Activated T-helper 1 cell treated with anti-CD3 and anti-CD28 coated beads, Interleukin-12 subunit alpha, Interleukin-12 subunit beta, Interleukin-2, Interleukin-4 antibody, amounts not matched to agents 30 ng/mL and 10 ng/mL and 1 ng/mL, durations not matched to agents 14 hours and 24 hours and 36 hours (primary cell): ENCODE measurements at regions of chr1 and their contacts with region 1.

Region 1: DNA sequence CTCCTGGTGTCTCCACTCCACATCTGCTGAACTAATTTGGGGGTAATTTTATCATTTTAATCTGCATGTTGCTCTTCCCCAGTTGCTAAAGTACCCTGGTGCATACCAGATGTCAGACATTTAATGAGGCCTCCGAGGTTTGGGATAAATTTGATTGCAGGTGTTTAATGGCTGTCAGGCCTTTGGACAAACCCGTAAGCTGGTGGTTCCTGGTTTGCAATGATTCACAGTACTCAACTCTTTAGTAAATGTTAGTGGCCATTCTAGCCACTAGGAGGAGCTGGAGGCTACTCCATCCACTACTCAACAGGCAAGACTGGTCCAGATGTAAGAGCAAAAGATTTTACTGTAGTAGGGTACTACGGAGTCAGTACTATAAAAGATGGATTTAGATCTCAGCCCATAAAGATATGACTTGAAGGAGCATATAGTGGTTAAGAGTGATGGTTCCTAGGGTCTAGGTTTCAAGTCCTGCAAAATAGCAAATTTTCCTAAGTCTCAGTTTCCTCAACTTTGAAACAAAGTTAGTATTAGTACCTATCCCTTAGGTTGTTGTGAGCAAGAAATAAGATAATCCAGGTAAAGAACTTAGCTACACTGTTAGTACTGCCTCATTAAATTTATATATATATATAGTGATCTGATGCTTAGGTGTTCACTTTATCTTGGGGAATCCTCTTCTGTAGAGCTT is 132.8 kb downstream of the SNX7 start:
- DNase-seq: peak; percentile 36
- H3K4me3 Mint-ChIP-seq: no peak overlapping the region
- H3K27ac Mint-ChIP-seq: no peak overlapping the region
- H3K4me1 Mint-ChIP-seq: peaks cover 16% of the 10 kb centered on the region
- H3K27me3 Mint-ChIP-seq: peaks cover 13% of the 10 kb centered on the region

Region 2: GRCh38 chr1:98086796-98087441 is 707.4 kb before region 1 on chr1:
- intact Hi-C with region 1: no loop called
- DNase-seq: no peak
- H3K4me3 Mint-ChIP-seq: no peak overlapping the region
- H3K27ac Mint-ChIP-seq: no peak overlapping the region
- H3K4me1 Mint-ChIP-seq: no peaks in the 10 kb centered on the region
- H3K27me3 Mint-ChIP-seq: no peaks in the 10 kb centered on the region

Region 3: DNA sequence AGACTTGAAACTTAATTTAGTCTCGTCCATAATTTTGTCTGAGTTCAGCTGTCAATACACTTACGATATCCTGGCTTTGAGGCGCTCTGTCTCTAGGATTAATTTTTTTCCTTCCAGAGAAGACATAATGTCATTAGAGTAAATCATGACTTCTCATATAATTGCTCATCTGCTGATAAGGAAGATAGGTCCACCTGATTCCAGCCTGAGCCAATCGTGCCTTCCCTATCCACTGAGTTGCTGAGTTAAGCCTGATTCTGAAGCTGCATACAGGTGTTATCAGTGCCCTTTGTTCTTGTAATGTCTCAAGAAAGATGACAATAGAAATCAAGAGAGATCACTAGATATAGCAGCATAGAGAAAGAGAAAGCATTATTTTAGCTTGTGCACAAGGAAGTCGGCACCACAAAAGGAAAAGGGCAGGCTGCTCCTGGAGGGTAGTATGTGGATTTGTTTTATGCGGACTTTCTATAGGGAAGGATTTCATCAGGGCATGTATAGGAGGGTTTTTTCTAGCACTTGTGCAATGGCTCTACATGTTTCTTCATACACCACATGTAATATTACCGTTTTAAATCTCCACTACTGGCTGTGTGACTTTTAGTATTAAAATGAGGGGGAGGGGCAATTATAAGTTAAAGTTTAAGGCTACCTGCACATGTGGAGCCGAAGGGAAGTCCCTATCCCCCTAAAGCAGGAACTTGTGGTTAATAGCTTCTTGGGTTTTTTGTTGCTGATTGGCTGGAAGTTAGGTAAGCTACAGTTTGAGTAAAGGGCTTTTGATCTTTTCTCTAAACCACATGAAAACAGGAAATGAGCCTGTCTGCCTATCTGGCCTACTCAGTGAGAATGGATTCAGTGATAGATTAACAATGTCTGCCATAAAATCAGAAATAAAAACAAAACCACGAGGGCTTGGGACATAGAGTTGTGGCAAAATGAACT is 76.9 kb after region 1 on chr1:
- intact Hi-C with region 1: loop called (anchors 1 kb)
- DNase-seq: peak; percentile 52
- H3K4me3 Mint-ChIP-seq: peak overlapping the region; percentile 75
- H3K27ac Mint-ChIP-seq: peak overlapping the region; percentile 92
- H3K4me1 Mint-ChIP-seq: peaks cover 18% of the 10 kb centered on the region
- H3K27me3 Mint-ChIP-seq: no peaks in the 10 kb centered on the region

Region 4: GRCh38 chr1:98991127-98992012 is 197.0 kb after region 1 on chr1:
- intact Hi-C with region 1: loop called (anchors 1 kb)
- DNase-seq: no peak
- H3K4me3 Mint-ChIP-seq: no peak overlapping the region
- H3K27ac Mint-ChIP-seq: peak overlapping the region; percentile 25
- H3K4me1 Mint-ChIP-seq: peaks cover 8% of the 10 kb centered on the region
- H3K27me3 Mint-ChIP-seq: peaks cover 1% of the 10 kb centered on the region

Region 5: DNA sequence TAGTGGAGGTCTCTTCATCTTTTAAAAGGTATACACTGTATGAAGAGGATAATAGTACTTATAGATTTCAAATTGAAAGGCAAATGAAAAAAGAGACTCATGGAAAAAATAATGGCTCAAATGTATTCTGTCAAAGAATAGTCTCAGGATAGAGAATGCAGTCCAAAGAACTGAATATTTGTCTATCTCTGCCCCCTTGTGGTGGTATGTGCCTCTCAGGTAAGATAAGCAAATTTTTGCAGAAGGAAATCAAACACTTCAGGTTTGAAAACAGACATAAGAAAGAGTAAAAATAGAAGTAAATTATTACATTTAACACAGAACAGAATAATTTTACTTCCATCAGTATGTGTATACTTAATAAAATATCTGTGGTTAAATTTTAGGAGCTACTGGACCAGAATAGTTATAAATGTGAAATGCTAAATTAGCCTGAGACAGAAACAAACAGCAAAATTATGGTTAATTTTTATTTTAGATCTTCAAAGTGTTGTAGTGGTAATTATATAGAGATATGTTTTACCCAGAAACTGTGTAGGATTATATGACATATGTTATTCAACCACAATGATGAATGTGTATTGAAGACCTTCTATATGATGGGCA is 687.2 kb after region 1 on chr1:
- intact Hi-C with region 1: loop called (anchors 1 kb)
- DNase-seq: no peak
- H3K4me3 Mint-ChIP-seq: no peak overlapping the region
- H3K27ac Mint-ChIP-seq: no peak overlapping the region
- H3K4me1 Mint-ChIP-seq: no peaks in the 10 kb centered on the region
- H3K27me3 Mint-ChIP-seq: peaks cover 8% of the 10 kb centered on the region

Region 6: DNA sequence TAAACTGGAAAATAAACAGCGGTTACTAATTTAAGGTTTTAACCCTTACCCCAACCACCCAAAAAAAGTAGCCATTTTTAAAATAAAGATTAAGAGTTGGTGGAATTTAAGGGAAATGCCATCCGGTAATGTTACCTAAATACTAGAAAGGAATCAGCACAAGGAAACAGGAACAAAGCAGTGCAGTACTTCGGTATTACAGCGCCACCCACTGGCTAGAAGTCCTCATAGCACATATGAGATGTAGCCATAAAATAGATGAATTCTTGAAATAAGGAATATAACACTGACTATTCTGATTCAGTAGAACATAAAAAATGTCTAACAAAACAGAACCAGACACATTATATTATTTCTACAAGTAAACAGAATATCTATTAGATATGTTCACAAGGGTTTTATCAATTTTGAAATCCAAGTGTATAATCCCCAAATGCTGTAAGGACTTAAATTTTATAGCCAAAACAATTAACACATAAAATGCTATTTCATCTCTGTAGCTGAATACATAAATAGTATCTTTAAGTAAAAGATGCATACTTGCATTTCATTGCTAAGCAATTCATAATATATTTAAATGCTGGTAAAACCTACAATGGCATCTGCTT is 913.3 kb after region 1 on chr1:
- intact Hi-C with region 1: loop called (anchors 1 kb)
- DNase-seq: peak; percentile 16
- H3K4me3 Mint-ChIP-seq: no peak overlapping the region
- H3K27ac Mint-ChIP-seq: no peak overlapping the region
- H3K4me1 Mint-ChIP-seq: peaks cover 16% of the 10 kb centered on the region
- H3K27me3 Mint-ChIP-seq: peaks cover 2% of the 10 kb centered on the region